Activated CD4-positive, alpha-beta T cell treated with anti-CD3 and anti-CD28 coated beads, Interleukin-2, amount 10 ng/mL, durations not matched to agents 7 days and 5 days (primary cell): ENCODE measurements at regions of chr14 and their contacts with region 1.

Region 1: GRCh38 chr14:34678306-34678705 is 36.1 kb downstream of the CFL2 start:
- DNase-seq: no peak
- H3K4me3 Mint-ChIP-seq: no peak overlapping the region
- H3K27ac Mint-ChIP-seq: no peak overlapping the region
- H3K4me1 Mint-ChIP-seq: peaks cover 8% of the 10 kb centered on the region
- H3K27me3 Mint-ChIP-seq: no peaks in the 10 kb centered on the region

Region 2: GRCh38 chr14:34604995-34605394 is 73.3 kb before region 1 on chr14:
- CTCF ChIA-PET with region 1: no interaction called
- POLR2A ChIA-PET with region 1: no interaction called
- DNase-seq: no peak
- H3K4me3 Mint-ChIP-seq: no peak overlapping the region
- H3K27ac Mint-ChIP-seq: no peak overlapping the region
- H3K4me1 Mint-ChIP-seq: no peaks in the 10 kb centered on the region
- H3K27me3 Mint-ChIP-seq: no peaks in the 10 kb centered on the region

Region 3: GRCh38 chr14:34628681-34629135 is 49.6 kb before region 1 on chr14:
- CTCF ChIA-PET with region 1: no interaction called
- POLR2A ChIA-PET with region 1: no interaction called
- DNase-seq: peak; percentile 45
- H3K4me3 Mint-ChIP-seq: peak overlapping the region; percentile 85
- H3K27ac Mint-ChIP-seq: peak overlapping the region; percentile 86
- H3K4me1 Mint-ChIP-seq: peaks cover 32% of the 10 kb centered on the region
- H3K27me3 Mint-ChIP-seq: peaks cover 8% of the 10 kb centered on the region

Region 4: DNA sequence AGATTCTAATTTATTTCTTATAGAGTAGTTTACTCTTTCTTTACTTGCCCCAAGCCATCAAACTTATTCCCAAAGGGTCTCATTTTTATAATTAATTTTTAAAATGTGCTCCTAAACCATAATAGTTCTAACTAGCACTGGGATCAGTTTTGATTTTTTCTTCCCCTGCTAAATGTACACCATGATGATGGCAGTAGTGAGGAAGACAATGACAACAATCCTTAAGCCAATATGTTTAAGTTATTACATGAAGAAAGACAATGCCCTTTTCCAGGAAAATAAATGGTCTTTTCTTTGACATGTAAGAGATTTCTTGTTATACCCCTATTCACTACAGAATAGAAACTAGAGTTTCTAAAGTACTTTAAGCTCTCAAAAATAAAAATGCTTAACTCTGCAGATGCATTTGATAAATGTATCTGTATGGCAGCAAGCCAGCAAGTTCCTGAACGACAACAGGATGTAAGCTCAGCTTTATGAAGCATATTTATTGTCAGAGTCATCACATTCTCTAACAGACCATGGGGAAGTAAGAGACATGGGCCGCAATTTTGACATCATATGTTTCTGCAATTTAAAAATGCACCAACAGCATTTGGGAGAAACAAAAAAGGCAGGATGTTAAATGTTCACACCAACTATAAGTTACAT is 12.4 kb before region 1 on chr14:
- CTCF ChIA-PET with region 1: no interaction called
- POLR2A ChIA-PET with region 1: no interaction called
- DNase-seq: peak; percentile 35
- H3K4me3 Mint-ChIP-seq: no peak overlapping the region
- H3K27ac Mint-ChIP-seq: peak overlapping the region; percentile 84
- H3K4me1 Mint-ChIP-seq: peaks cover 12% of the 10 kb centered on the region
- H3K27me3 Mint-ChIP-seq: peaks cover 2% of the 10 kb centered on the region

Region 5: DNA sequence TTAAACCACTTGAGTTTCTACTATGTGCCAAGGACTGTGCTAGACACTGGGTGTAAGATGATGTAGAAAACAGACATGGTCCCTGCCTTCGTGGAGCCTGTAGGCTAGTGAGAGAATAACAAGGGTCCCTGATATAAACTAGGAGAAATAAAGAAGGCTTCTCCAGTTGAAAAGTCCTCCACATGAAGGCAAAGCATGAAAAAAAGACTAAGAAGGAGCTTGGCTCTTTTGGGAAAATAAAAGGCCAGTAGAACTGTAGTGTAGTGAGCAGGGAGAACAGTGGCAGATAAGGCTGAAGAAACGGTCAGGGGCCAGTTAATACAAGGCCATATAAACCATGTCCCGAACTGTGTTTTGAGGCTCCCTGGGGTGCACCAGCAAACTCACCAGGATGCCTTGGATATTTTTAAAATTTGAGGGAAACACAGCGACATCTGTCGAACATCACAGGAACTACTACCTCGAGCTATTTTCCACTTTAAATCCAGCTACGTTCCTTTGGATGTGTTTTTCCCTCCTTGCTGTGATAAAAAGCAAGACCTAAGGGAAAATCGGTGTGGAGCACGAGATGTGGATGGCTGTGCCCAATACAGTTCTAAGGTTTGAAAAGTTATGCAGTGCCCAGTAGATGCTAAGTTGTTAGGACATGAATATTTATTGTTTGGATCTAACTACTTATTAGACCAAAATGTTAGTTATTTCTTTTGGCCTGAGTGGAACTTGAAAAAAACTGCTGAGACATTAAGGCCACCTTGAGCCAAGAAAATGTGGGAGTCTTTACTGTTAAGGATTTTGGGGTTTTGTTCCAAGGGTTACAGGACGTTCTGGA is 44.6 kb after region 1 on chr14:
- CTCF ChIA-PET with region 1: interaction called, 14 read pairs
- POLR2A ChIA-PET with region 1: no interaction called
- DNase-seq: peak; percentile 35
- H3K4me3 Mint-ChIP-seq: no peak overlapping the region
- H3K27ac Mint-ChIP-seq: no peak overlapping the region
- H3K4me1 Mint-ChIP-seq: peaks cover 7% of the 10 kb centered on the region
- H3K27me3 Mint-ChIP-seq: peaks cover 20% of the 10 kb centered on the region

Region 6: DNA sequence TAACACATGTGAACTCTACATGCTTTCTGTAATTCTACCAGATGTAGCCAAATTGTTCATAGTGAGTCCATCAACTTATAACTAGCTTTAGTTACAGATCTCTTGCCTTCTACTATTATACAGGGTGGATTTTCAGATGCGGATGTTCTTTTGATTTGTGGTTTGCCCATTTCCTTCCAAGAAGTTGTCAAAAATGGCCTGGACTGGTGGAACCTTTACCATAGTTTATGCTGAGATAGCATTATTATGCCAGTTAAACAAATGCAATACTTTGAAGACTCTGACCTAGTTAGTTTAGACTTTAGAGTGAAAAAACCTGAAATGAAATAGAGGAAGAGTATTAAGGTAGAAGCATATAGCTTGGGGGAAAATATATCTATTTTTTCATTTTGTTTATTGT is 63.5 kb after region 1 on chr14:
- CTCF ChIA-PET with region 1: no interaction called
- POLR2A ChIA-PET with region 1: no interaction called
- DNase-seq: no peak
- H3K4me3 Mint-ChIP-seq: no peak overlapping the region
- H3K27ac Mint-ChIP-seq: no peak overlapping the region
- H3K4me1 Mint-ChIP-seq: peaks cover 12% of the 10 kb centered on the region
- H3K27me3 Mint-ChIP-seq: no peaks in the 10 kb centered on the region